CD4-positive, alpha-beta memory T cell (primary cell): ENCODE measurements at regions of chr12 and their contacts with region 1.

Region 1: DNA sequence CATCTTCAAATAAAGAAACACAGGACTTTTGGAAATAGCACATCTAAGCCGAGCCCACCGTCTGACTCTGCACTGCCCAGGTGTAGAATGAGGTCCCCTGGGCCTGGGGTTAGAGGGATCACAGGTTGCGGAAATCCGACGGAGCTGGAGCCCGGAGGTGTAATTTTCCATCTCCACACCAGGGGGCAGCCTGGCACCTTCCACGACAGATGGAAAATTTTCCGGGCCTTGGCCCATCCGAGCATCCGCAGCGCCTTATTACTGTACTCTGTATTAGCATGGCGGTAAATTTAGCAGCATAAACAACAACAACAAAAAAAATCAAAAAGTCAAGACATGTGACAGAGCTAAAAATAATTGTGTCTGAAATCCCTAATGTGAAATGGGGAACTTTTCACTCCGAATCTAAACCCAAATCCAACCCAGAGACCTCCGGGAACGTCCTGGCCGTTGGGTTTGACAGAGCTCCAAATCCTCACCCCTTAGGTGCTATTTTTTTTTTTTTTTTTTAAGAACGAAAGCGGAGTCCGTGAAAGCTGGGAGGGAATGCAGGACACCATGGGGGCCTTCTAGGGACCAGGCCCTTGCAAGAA is 93.9 kb downstream of the KSR2 start:
- DNase-seq: peak; percentile 50 to 67 (median 62)
- H3K4me3 ChIP-seq: no peak overlapping the region
- H3K4me3 Mint-ChIP-seq: peak overlapping the region in 7 of 8 donors; percentile 27 to 77 (median 54)
- H3K27ac ChIP-seq: peak overlapping the region; percentile 21
- H3K27ac Mint-ChIP-seq: peak overlapping the region in 6 of 7 donors; percentile 59 to 93 (median 86)
- H3K4me1 ChIP-seq: peaks cover 6% of the 10 kb centered on the region
- H3K4me1 Mint-ChIP-seq: peaks cover 6 to 14% (median 10%) of the 10 kb centered on the region in 4 donors
- H3K27me3 ChIP-seq: no peaks in the 10 kb centered on the region
- H3K27me3 Mint-ChIP-seq: peaks cover 3 to 13% of the 10 kb centered on the region in 2 donors

Region 2: DNA sequence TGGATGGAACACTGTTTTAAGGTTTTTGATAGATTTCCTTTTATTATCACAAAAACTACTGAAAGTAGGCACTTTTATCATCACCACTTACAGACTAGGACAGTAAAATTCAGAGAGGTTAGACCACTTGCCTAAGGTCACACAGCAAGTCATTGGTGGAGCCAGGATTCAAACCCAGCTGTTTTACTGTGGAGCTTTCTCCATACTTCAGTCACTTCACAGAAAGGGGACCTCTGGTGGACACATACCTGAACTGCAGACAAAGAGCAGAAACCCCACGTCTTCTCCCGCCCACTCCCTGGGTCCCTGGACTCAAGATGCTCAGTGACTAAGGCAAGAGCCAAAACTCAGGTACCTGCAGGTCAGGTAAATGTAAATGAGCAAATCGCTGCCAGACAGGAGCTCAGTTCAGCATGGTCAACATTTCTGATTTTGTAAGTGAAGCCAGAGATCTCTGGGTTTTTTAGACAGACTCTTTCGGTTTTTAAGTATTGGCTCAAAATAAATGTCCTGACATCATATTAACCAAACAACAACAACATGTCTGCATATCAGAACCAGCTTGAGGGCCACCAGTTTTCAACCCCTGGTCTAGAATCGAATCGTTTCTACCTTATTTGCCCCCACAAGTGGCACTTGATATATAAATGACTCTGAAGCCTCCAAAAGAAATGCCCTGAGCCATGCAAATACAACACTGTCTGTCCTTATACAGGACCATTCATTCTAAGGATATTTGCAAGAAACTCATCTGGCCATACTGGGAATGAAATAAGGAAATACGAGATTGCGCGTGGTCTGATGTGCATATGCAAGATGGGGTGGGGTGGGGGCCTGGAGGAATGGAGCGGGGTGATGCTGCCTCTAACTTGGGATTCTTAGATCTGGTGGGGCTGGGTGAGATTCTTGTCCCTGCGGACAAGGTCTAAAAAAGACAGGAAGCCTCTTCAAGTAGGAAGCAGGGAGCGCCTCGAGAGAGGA is 17.0 kb before region 1 on chr12:
- CTCF ChIA-PET with region 1: interaction called, 38 read pairs
- POLR2A ChIA-PET with region 1: no interaction called
- intact Hi-C with region 1: no loop called
- DNase-seq: peak in 4 of 5 donors; percentile 15 to 44 (median 26)
- H3K4me3 ChIP-seq: no peak overlapping the region
- H3K4me3 Mint-ChIP-seq: no peak overlapping the region
- H3K27ac ChIP-seq: no peak overlapping the region
- H3K27ac Mint-ChIP-seq: no peak overlapping the region
- H3K4me1 ChIP-seq: peaks cover 5% of the 10 kb centered on the region
- H3K4me1 Mint-ChIP-seq: peaks cover 0 to 2% (median 0%) of the 10 kb centered on the region in 4 donors
- H3K27me3 ChIP-seq: no peaks in the 10 kb centered on the region
- H3K27me3 Mint-ChIP-seq: peaks cover 0 to 3% of the 10 kb centered on the region in 2 donors

Region 3: GRCh38 chr12:118035246-118036041 is 160.5 kb after region 1 on chr12:
- CTCF ChIA-PET with region 1: interaction called, 50 read pairs
- POLR2A ChIA-PET with region 1: interaction called, 11 read pairs
- intact Hi-C with region 1: loop called (anchors 1 kb)
- DNase-seq: no peak
- H3K4me3 ChIP-seq: no peak overlapping the region
- H3K4me3 Mint-ChIP-seq: no peak overlapping the region
- H3K27ac ChIP-seq: no peak overlapping the region
- H3K27ac Mint-ChIP-seq: peak overlapping the region; percentile 5 to 87 (median 68)
- H3K4me1 ChIP-seq: no peaks in the 10 kb centered on the region
- H3K4me1 Mint-ChIP-seq: peaks cover 17 to 20% (median 19%) of the 10 kb centered on the region in 4 donors
- H3K27me3 ChIP-seq: no peaks in the 10 kb centered on the region
- H3K27me3 Mint-ChIP-seq: no peaks in the 10 kb centered on the region

Region 4: DNA sequence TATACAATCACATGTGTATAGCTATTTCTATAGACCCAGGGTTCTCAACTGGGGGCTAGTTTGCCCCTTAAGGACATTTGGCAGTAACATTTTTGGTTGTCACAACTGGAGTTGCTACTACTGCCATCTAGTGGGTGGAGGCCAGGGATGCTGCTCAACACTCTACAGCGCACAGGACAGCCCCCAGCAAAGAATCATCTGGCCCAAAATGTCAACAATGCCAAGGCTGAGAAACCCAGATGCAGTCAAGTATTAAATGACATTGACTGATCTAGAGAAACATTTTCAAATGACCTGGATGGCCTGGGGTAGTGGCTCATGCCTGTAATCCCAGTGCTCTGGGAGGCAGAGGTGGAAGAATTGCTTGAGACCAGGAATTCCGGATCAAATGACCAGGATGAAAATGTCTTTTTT is 180.2 kb after region 1 on chr12:
- CTCF ChIA-PET with region 1: interaction called, 22 read pairs
- POLR2A ChIA-PET with region 1: no interaction called
- intact Hi-C with region 1: loop called (anchors 1 kb)
- DNase-seq: peak; percentile 64 to 81 (median 69)
- H3K4me3 ChIP-seq: no peak overlapping the region
- H3K4me3 Mint-ChIP-seq: peak overlapping the region in 4 of 8 donors; percentile 6 to 60 (median 50)
- H3K27ac ChIP-seq: no peak overlapping the region
- H3K27ac Mint-ChIP-seq: peak overlapping the region in 6 of 7 donors; percentile 75 to 85 (median 80)
- H3K4me1 ChIP-seq: peaks cover 28% of the 10 kb centered on the region
- H3K4me1 Mint-ChIP-seq: peaks cover 32 to 67% (median 45%) of the 10 kb centered on the region in 4 donors
- H3K27me3 ChIP-seq: no peaks in the 10 kb centered on the region
- H3K27me3 Mint-ChIP-seq: no peaks in the 10 kb centered on the region